ENCODE measurements at regions of chr16 and their contacts with region 1.

Region 1: DNA sequence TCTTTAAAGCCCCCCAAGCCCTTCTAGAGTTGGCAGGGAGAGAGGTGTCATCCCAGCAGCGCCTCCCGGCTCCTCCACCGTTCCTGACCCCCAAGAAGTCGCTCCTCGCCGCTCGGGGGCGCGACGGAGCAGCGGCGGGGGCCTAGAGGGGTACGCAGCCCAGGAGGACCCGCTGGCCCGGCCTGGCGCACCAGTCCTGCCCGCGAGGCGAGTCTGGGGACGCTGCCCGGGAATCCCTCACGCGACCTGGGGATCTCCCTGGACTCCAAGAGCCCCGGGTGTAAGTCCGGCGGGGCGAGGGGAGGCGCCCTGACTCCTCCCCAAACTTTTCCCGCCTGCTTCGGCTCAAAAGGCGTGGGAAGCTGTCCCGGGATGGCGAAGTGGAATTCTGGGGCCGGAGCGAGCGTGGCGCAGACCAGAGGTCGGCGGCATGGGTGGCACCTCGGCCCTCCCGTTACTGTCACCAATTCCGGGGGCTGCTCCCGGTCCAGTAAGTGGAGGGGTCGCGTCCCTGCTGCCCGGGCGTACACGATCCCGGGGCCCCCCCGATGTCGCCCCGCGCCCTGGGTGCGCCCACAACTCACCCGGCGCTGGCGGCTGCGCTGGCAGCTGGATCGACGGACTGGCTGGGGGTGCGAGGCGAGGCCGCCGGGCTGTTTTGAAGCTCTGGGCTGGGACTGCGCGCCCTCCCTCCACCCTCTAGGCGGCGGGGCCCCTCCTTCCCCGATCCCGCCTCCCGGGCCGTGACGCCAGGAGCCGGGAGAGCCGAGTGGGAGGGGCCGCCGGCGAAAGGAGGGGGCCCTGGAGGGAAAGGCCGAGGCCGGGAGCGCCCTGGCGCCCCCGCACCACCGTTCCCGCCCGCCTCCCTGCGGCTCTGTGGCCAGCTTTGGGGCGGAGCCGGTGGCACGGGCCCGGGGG is at the start of gene EMP2:
- DNase-seq: peak; percentile 88 to 96
- ATAC-seq: peak; percentile 95
- H3K4me3 ChIP-seq: peak within 1 kb of the TSS; percentile 79 to 90
- H3K27ac ChIP-seq: peak within 1 kb of the TSS; percentile 58 to 88
- H3K4me1 ChIP-seq: no peaks in the 10 kb centered on the region
- H3K27me3 ChIP-seq: no peaks in the 10 kb centered on the region
- total RNA-seq, gene EMP2: 133 to 143 TPM

Region 2: DNA sequence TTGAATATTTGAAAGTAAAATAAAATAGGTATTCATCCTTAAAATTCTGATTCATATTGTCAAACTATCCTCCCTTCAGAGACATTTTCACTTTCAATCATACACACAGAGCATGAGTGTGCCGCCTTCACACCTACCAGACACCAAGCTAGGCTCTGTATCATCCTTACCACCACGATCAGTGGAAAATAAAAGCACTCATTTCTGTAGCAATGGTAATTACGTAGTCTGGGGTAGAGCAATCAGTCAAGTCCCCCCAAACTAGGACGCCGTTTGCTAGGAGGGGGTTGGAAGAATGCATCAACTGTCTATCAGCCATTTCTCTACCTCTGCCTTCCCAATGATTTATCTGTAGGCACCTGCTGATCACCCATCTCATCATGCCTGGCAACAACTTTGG is 313.4 kb before region 1 on chr16:
- intact Hi-C with region 1: loop called in 1 of 2 experiments (anchors 5 kb)
- DNase-seq: no peak
- ATAC-seq: no peak
- H3K4me3 ChIP-seq: no peak overlapping the region
- H3K27ac ChIP-seq: no peak overlapping the region
- H3K4me1 ChIP-seq: peaks cover 0 to 2% of the 10 kb centered on the region in 2 donors
- H3K27me3 ChIP-seq: no peaks in the 10 kb centered on the region

Region 3: GRCh38 chr16:10521681-10522274 is 58.4 kb before region 1 on chr16:
- intact Hi-C with region 1: loop called (anchors 2 to 5 kb)
- DNase-seq: peak in 1 of 2 donors; percentile 74
- ATAC-seq: peak; percentile 85
- H3K4me3 ChIP-seq: no peak overlapping the region
- H3K27ac ChIP-seq: no peak overlapping the region
- H3K4me1 ChIP-seq: no peaks in the 10 kb centered on the region
- H3K27me3 ChIP-seq: no peaks in the 10 kb centered on the region

Region 4: GRCh38 chr16:10558746-10559641 is 21.2 kb before region 1 on chr16:
- intact Hi-C with region 1: loop called in 1 of 2 experiments (anchors 2 kb)
- DNase-seq: peak; percentile 93
- ATAC-seq: peak; percentile 88
- H3K4me3 ChIP-seq: peak overlapping the region in 1 of 2 donors; percentile 12
- H3K27ac ChIP-seq: peak overlapping the region; percentile 83 to 98
- H3K4me1 ChIP-seq: peaks cover 0 to 4% of the 10 kb centered on the region in 2 donors
- H3K27me3 ChIP-seq: no peaks in the 10 kb centered on the region

Region 5: GRCh38 chr16:10745841-10746240 is 165.6 kb after region 1 on chr16:
- intact Hi-C with region 1: no loop called
- DNase-seq: no peak
- ATAC-seq: no peak
- H3K4me3 ChIP-seq: no peak overlapping the region
- H3K27ac ChIP-seq: no peak overlapping the region
- H3K4me1 ChIP-seq: peaks cover 0 to 2% of the 10 kb centered on the region in 2 donors
- H3K27me3 ChIP-seq: no peaks in the 10 kb centered on the region

Measured in aorta (tissue), 5 donors.